A549 (cell line): ENCODE measurements at regions of chr10 and their contacts with region 1.

Region 1: GRCh38 chr10:27252267-27253000 is 11.8 kb upstream of the ACBD5 start:
- DNase-seq: peak; percentile 36 to 65
- ATAC-seq: peak; percentile 98
- H3K4me3 ChIP-seq: peak overlapping the region; percentile 56
- H3K27ac ChIP-seq: peak overlapping the region; percentile 87 to 91
- H3K4me1 ChIP-seq: no peaks in the 10 kb centered on the region
- CTCF ChIP-seq: peak; percentile 48
- EP300 ChIP-seq: no peak
- POLR2A ChIP-seq: peak; percentile 56; the same call in 1 of the 2 replicates
- RAD21 ChIP-seq: no peak

Region 2: GRCh38 chr10:27241652-27242472 is 10.6 kb before region 1 on chr10:
- CTCF ChIA-PET with region 1: interaction called, 11 read pairs
- POLR2A ChIA-PET with region 1: interaction called, 14 read pairs
- DNase-seq: peak; percentile 64 to 97
- ATAC-seq: peak; percentile 69 to 83
- H3K4me3 ChIP-seq: peak overlapping the region; percentile 62
- H3K27ac ChIP-seq: peak overlapping the region; percentile 89 to 92
- H3K4me1 ChIP-seq: peaks cover 31% of the 10 kb centered on the region
- CTCF ChIP-seq: peak; percentile 18; the same call in 1 of the 3 replicates
- EP300 ChIP-seq: no peak
- POLR2A ChIP-seq: peak; percentile 80
- RAD21 ChIP-seq: peak in 1 of 2 experiments; percentile 27; a peak in 1 of 5 replicates